ENCODE measurements at regions of chr7 and their contacts with region 1.

Region 1: GRCh38 chr7:128347647-128348097 is 4.0 kb upstream of the RBM28 start:
- DNase-seq: no peak
- H3K4me3 ChIP-seq: no peak overlapping the region
- H3K27ac ChIP-seq: no peak overlapping the region
- H3K4me1 ChIP-seq: peaks cover 0 to 24% (median 21%) of the 10 kb centered on the region in 4 donors
- H3K27me3 ChIP-seq: peaks cover 14 to 29% (median 16%) of the 10 kb centered on the region in 3 donors
- CTCF ChIP-seq: peak; percentile 34 to 51 (median 46)
- EP300 ChIP-seq: no peak
- POLR2A ChIP-seq: no peak

Region 2: DNA sequence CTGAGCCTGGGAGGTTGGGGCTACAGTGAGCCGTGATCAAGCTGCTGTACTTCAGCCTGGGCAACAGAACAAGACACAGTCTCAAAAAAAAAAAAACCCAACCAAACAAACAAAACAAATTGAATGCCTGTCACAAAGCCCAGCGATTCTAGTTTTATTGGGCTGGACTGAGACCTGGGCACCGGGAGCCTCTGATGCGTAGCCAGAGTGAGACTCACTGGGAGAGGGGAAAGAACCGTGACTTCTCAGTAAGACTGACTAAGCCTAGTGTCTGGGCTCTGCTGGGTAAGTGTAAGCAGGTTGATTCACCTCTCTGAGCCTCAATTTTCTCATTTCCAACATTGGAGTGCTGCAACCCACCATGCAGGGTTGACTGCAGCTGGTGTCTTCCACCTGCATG is 116.7 kb before region 1 on chr7:
- intact Hi-C with region 1: no loop called
- DNase-seq: no peak
- H3K4me3 ChIP-seq: no peak overlapping the region
- H3K27ac ChIP-seq: no peak overlapping the region
- H3K4me1 ChIP-seq: no peaks in the 10 kb centered on the region
- H3K27me3 ChIP-seq: peaks cover 0 to 19% (median 4%) of the 10 kb centered on the region in 3 donors
- CTCF ChIP-seq: no peak
- EP300 ChIP-seq: no peak
- POLR2A ChIP-seq: no peak

Region 3: DNA sequence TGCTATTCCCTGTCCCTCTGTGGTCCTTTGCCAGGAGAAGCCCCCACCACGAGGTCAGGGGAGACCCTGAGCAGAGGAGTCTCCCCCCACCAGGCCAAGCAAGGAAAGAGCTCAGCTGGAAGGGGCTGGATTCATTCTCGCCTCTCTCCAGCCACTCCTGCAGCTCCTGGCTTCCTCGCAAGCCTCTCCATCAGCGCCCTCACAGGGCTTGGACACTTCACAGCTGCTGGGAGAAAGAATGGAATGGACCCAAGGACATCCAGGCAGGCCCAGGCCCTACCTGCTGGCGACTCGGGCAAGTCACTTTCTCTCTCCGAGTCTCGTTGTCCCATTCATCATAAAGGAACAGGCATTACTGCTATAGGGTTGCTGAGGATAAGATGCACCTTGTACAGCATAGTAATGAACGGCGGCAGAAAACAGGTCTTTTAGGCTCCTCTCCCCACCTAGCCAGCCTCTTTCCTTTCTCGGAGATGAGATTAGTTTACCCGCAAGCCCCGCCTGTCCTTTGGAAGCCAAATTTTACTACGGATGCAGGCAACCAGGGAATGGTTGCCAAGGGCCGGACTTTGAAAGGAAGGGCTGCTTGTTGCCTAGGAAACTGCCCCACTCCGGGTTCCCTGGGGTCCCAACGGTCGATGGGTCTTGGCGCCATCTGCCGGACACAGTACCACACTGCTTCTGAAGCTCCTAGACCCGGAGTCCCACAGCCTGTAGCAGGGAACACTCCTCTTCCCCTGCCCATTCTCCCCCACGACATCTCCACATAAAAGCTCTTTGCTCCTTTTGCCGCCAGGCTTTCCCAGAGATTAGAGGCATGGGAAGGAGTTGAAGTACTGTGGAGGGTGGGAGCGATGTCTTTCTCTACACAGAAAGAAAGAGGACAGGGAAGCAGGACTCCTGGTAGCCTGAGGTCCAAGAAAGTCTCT is 39.8 kb after region 1 on chr7:
- intact Hi-C with region 1: loop called (anchors 1 kb)
- DNase-seq: peak; percentile 91
- H3K4me3 ChIP-seq: no peak overlapping the region
- H3K27ac ChIP-seq: peak overlapping the region in 1 of 4 donors; percentile 18
- H3K4me1 ChIP-seq: peaks cover 0 to 9% (median 7%) of the 10 kb centered on the region in 4 donors
- H3K27me3 ChIP-seq: no peaks in the 10 kb centered on the region
- CTCF ChIP-seq: peak; percentile 59 to 89 (median 74)
- EP300 ChIP-seq: no peak
- POLR2A ChIP-seq: no peak

Region 4: DNA sequence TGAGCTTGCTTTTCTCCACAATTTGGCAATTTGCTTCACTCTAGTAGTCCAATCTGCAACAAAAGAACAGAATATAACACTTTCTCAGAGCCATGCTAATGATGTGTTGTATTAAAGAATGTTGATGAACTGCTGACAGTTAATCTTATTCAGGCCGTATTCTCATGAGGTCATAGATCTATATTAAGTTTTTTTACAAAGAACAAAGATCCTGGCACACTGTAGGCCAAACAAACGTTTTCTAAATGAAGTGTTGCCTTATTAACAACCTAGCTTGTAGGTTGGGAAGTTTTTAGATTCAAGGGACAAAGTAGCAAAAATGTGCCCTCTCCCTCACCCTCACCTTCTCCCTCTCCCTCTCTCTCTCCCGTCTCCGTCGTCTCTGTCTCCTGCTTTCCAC is 114.8 kb after region 1 on chr7:
- intact Hi-C with region 1: loop called (anchors 5 kb)
- DNase-seq: no peak
- H3K4me3 ChIP-seq: no peak overlapping the region
- H3K27ac ChIP-seq: no peak overlapping the region
- H3K4me1 ChIP-seq: peaks cover 0 to 13% (median 4%) of the 10 kb centered on the region in 4 donors
- H3K27me3 ChIP-seq: no peaks in the 10 kb centered on the region
- CTCF ChIP-seq: no peak
- EP300 ChIP-seq: no peak
- POLR2A ChIP-seq: no peak